CD8-positive, alpha-beta T cell (primary cell): ENCODE measurements at regions of chr16 and their contacts with region 1.

Region 1: DNA sequence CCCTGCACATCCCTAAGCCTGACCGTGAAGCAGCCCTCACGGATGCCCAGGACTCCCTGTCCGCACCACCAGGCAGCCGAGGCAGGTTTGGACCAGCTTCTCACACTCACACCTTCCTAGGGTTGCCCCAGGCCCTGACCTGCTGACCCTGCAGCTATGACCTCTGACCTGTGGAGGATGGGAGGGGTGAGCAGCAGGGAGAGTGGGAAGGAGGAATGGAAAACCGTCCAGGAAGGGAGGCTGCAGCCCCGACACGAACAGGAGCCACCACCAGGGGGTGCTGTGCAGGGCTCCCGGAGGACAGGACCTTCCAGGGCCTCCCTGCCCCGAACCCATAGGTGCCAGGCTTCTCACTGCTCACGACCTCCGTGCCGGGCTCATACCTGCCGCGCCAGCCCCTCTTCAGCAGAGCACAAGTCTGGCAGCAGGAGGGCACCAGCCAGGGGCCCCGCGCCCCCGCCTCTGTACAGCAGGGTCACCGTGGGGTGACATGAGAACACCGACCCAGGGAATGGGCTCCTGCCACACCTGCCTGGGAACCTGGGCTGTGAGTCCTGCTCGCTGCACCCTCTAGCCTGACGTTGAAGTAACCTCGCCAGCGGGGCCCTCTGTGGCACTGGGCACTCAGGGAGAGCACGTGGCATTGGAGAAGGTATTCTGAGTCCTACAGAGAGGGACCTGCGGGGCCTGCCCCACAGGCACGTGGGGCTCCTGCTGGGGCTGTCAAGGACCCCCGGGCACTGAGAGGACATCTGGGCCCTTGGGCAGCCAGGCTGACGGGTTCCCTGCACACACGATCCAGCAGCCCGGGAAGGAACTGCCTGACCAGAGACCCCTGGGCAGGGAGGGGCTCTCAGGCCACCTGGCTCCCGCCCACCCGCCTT is 37.6 kb downstream of the CTU2 start:
- DNase-seq: peak; percentile 43 to 88 (median 77)
- ATAC-seq: peak; percentile 64
- H3K4me3 ChIP-seq: no peak overlapping the region
- H3K4me3 Mint-ChIP-seq: no peak overlapping the region
- H3K27ac ChIP-seq: no peak overlapping the region
- H3K27ac Mint-ChIP-seq: no peak overlapping the region
- H3K4me1 ChIP-seq: peaks cover 33% of the 10 kb centered on the region
- H3K4me1 Mint-ChIP-seq: peaks cover 25% of the 10 kb centered on the region
- H3K27me3 ChIP-seq: no peaks in the 10 kb centered on the region
- H3K27me3 Mint-ChIP-seq: no peaks in the 10 kb centered on the region
- CTCF ChIP-seq: peak; percentile 89

Region 2: DNA sequence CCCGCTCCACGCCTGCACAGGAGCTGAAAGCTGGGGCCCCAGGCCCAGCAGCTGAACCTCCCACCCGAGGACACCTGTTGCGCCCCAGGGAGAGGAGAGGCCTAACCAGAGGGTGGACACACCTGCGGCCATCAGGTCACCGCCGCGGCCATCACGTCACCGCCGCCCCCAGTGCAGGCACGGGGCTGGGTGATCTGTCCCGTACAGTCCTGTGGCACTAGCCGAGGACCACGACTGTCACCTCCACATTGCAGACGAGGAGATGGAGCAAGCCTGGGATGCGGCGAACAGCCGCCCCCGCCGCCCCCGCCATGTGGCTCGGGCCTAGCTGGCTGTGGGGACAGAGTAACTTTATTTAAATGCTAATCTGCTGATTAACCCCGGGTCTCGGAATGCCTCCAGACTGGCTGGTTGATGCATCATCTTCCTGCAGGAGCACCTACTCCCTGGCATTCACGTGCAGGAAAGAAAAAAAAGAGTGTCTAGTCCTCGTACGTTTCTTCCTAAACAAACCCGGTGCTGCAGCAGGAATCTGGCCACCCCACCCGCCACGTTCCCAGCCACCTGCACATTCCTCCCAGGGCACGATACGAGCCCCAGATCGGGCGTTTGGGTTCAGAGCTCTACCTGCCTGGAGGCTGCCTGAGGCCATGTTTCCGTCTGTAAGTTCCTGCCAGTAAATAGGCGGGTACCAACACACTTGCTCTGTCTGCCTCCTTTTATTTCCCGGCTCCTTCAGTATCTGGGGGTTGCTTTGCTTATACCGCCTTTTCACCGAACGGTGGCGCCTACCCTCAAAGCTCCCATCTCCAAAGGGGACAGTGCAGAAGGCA is 11.2 kb after region 1 on chr16:
- CTCF ChIA-PET with region 1: interaction called, 16 read pairs
- POLR2A ChIA-PET with region 1: no interaction called
- intact Hi-C with region 1: no loop called
- DNase-seq: peak in 1 of 9 experiments; percentile 19
- ATAC-seq: peak; percentile 61
- H3K4me3 ChIP-seq: no peak overlapping the region
- H3K4me3 Mint-ChIP-seq: no peak overlapping the region
- H3K27ac ChIP-seq: no peak overlapping the region
- H3K27ac Mint-ChIP-seq: no peak overlapping the region
- H3K4me1 ChIP-seq: no peaks in the 10 kb centered on the region
- H3K4me1 Mint-ChIP-seq: peaks cover 14% of the 10 kb centered on the region
- H3K27me3 ChIP-seq: no peaks in the 10 kb centered on the region
- H3K27me3 Mint-ChIP-seq: no peaks in the 10 kb centered on the region
- CTCF ChIP-seq: no peak